Mammary epithelial cell (primary cell): ENCODE measurements at regions of chr14 and their contacts with region 1.

Region 1: GRCh38 chr14:32076278-32077080 is 625 bp upstream of the ARHGAP5 start:
- DNase-seq: peak; percentile 98
- H3K4me3 ChIP-seq: peak overlapping the region; percentile 63 to 99 (median 71)
- H3K27ac ChIP-seq: peak overlapping the region; percentile 92
- H3K4me1 ChIP-seq: no peaks in the 10 kb centered on the region
- H3K27me3 ChIP-seq: no peaks in the 10 kb centered on the region
- CTCF ChIP-seq: no peak

Region 2: DNA sequence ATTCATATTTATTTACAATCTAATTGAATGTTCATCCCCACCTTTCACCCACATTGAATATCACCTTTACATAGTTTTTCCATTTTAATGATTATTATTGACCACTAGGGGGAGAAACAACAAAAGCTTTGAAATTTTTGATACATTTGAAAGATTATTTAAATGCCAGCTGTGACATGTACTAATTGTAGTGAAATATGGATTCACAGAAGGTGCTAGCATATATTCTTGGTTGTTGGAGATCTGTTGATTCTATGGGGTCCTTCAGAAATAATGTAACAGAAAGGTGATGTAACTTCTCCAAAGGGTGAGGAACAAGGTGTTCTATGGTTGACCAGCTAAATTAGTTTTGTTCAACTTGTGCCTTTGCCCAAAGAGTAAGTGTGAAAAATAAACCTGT is 566.3 kb before region 1 on chr14:
- CTCF ChIA-PET with region 1: no interaction called
- dilution Hi-C with region 1: no loop called
- in situ Hi-C with region 1: no loop called
- intact Hi-C with region 1: loop called (anchors 5 kb)
- DNase-seq: peak; percentile 20
- H3K4me3 ChIP-seq: no peak overlapping the region
- H3K27ac ChIP-seq: no peak overlapping the region
- H3K4me1 ChIP-seq: no peaks in the 10 kb centered on the region
- H3K27me3 ChIP-seq: no peaks in the 10 kb centered on the region
- CTCF ChIP-seq: peak; percentile 33 to 46

Region 3: DNA sequence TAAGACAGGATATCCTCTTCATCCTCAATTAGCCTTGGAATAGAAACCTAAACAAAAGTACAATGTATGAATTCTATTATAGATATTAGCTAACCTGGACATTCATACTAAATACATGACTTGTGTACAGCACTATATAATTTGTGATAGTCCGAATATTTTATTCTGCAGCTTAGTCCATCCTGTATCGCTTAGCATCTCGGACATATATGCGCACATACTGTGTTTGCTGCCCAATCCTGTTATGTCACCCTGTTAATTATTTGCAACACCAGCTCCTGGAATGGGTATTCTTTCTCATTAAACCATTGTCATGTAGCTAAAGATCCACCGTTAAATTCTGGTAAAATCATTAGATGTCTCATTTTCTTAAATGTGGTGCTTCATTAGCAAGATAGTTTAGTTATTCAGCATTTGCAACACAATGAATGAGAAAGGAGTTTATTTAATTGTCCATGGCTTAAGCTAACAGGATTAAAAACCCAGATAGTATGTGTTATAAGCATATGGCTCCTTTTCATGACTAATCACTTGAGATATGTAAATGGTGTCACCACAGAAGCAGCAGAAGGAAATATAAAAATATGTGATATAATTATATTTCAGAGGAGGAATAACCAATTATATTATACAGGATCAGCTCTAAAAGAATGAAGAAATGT is 155.4 kb before region 1 on chr14:
- CTCF ChIA-PET with region 1: no interaction called
- dilution Hi-C with region 1: no loop called
- in situ Hi-C with region 1: no loop called
- intact Hi-C with region 1: no loop called
- DNase-seq: no peak
- H3K4me3 ChIP-seq: no peak overlapping the region
- H3K27ac ChIP-seq: no peak overlapping the region
- H3K4me1 ChIP-seq: no peaks in the 10 kb centered on the region
- H3K27me3 ChIP-seq: no peaks in the 10 kb centered on the region
- CTCF ChIP-seq: no peak

Region 4: DNA sequence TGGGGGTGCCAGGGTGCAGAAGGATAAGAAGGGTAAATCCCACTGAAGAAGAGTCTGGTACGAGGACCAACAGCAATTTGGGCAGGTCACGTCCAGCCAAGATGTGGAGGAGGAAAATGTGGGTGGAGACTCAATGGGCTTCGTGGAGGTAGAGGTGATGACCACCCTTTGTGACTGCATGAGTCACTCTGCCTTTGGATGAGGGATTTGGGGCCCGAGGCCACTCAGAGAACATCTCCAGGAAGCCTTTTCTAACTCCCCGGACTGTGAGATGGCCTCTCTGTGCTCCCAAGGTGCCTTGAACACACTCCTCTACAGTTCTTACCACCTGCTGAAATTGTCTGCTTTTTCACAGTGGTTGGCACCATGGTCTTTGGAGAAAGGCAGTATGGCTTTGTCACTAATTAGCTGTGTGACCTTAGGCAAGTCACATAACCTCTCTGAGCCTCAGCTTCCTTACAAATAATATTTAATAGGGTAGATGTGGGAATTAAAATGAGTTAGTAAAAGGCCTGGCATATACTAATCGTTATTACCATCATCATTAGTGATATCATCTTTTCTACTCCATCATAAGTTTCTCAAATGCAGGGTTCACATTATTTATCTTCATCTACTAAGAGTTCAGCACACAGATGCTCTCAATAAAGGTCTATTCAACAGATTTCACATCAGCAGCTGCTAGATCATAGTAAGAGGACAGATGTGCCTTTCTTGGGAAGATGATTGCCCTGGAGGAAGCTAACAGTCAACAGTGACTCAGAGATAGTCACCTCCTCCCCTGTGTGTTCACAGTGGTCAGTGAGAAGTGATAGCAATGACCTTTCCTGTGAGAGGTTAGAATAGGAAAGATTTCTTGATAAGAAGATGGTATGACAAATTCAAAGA is 66.3 kb before region 1 on chr14:
- CTCF ChIA-PET with region 1: no interaction called
- dilution Hi-C with region 1: loop called (anchors 5 kb)
- in situ Hi-C with region 1: no loop called
- intact Hi-C with region 1: no loop called
- DNase-seq: peak; percentile 91
- H3K4me3 ChIP-seq: no peak overlapping the region
- H3K27ac ChIP-seq: peak overlapping the region; percentile 15
- H3K4me1 ChIP-seq: peaks cover 53% of the 10 kb centered on the region
- H3K27me3 ChIP-seq: no peaks in the 10 kb centered on the region
- CTCF ChIP-seq: no peak

Region 5: GRCh38 chr14:32102152-32102787 is 25.8 kb after region 1 on chr14:
- CTCF ChIA-PET with region 1: no interaction called
- dilution Hi-C with region 1: no loop called
- in situ Hi-C with region 1: no loop called
- intact Hi-C with region 1: no loop called
- DNase-seq: no peak
- H3K4me3 ChIP-seq: no peak overlapping the region
- H3K27ac ChIP-seq: no peak overlapping the region
- H3K4me1 ChIP-seq: no peaks in the 10 kb centered on the region
- H3K27me3 ChIP-seq: no peaks in the 10 kb centered on the region
- CTCF ChIP-seq: no peak

Region 6: GRCh38 chr14:32230695-32231280 is 154.3 kb after region 1 on chr14:
- CTCF ChIA-PET with region 1: no interaction called
- dilution Hi-C with region 1: no loop called
- in situ Hi-C with region 1: no loop called
- intact Hi-C with region 1: loop called (anchors 1 kb)
- DNase-seq: peak; percentile 64
- H3K4me3 ChIP-seq: no peak overlapping the region
- H3K27ac ChIP-seq: peak overlapping the region; percentile 64
- H3K4me1 ChIP-seq: peaks cover 41% of the 10 kb centered on the region
- H3K27me3 ChIP-seq: no peaks in the 10 kb centered on the region
- CTCF ChIP-seq: no peak

Region 7: GRCh38 chr14:32259368-32260013 is 183.0 kb after region 1 on chr14:
- CTCF ChIA-PET with region 1: no interaction called
- dilution Hi-C with region 1: no loop called
- in situ Hi-C with region 1: no loop called
- intact Hi-C with region 1: no loop called
- DNase-seq: peak; percentile 82
- H3K4me3 ChIP-seq: no peak overlapping the region
- H3K27ac ChIP-seq: no peak overlapping the region
- H3K4me1 ChIP-seq: peaks cover 10% of the 10 kb centered on the region
- H3K27me3 ChIP-seq: no peaks in the 10 kb centered on the region
- CTCF ChIP-seq: no peak

Region 8: DNA sequence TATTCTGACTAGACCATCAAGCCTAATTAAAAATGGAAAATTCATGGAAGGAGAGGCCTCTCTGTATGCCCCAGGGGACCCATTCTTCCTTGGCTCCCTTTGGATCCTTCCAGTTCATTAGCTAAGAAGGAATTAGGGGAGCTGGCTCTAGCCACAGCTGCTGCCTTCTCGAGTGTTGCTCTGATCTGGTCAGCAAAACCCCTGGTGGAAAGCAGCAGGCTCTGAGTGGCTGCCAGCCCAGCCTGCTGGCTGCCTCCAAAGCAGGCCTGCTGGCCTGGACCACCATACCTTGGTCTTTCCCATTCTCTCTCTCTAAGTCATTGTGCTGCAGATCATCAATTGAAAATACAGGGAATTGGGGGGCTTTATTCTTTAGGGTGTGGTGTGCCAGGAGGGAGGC is 223.7 kb after region 1 on chr14:
- CTCF ChIA-PET with region 1: no interaction called
- dilution Hi-C with region 1: no loop called
- in situ Hi-C with region 1: no loop called
- intact Hi-C with region 1: no loop called
- DNase-seq: no peak
- H3K4me3 ChIP-seq: no peak overlapping the region
- H3K27ac ChIP-seq: no peak overlapping the region
- H3K4me1 ChIP-seq: no peaks in the 10 kb centered on the region
- H3K27me3 ChIP-seq: no peaks in the 10 kb centered on the region
- CTCF ChIP-seq: no peak

Region 9: DNA sequence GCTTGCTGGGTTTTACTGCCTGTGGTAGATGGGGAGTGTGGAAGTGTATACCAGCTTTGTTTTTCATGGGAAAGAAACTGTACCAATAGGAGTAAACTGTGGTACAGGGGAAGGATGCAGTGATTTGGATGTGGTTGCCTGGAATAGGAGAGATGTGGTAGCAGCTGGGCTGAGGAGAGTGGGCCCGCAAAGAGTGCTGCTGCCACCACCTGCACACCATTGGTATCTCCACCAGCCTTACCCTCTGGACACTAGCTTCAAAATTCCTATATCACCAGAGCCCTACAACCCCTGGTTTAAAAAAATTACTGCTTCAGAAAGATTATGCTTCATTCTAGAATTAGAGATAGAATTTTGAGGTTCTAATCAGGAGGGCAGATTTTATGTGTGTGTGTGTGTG is 306.2 kb after region 1 on chr14:
- CTCF ChIA-PET with region 1: no interaction called
- dilution Hi-C with region 1: no loop called
- in situ Hi-C with region 1: loop called in 1 of 2 experiments (anchors 10 kb)
- intact Hi-C with region 1: loop called (anchors 1 kb)
- DNase-seq: peak; percentile 41
- H3K4me3 ChIP-seq: no peak overlapping the region
- H3K27ac ChIP-seq: no peak overlapping the region
- H3K4me1 ChIP-seq: peaks cover 9% of the 10 kb centered on the region
- H3K27me3 ChIP-seq: no peaks in the 10 kb centered on the region
- CTCF ChIP-seq: peak; percentile 65 to 88

Region 10: GRCh38 chr14:32560209-32560857 is 483.9 kb after region 1 on chr14:
- CTCF ChIA-PET with region 1: no interaction called
- dilution Hi-C with region 1: no loop called
- in situ Hi-C with region 1: no loop called
- intact Hi-C with region 1: loop called (anchors 1 kb)
- DNase-seq: peak; percentile 74
- H3K4me3 ChIP-seq: no peak overlapping the region
- H3K27ac ChIP-seq: peak overlapping the region; percentile 53
- H3K4me1 ChIP-seq: peaks cover 19% of the 10 kb centered on the region
- H3K27me3 ChIP-seq: no peaks in the 10 kb centered on the region
- CTCF ChIP-seq: peak; percentile 84 to 98